Psoas muscle (tissue), 8 donors: ENCODE measurements at regions of chr12 and their contacts with region 1.

Region 1: GRCh38 chr12:4276524-4277204 is 3.1 kb downstream of the CCND2 start:
- DNase-seq: peak; percentile 77 to 86
- ATAC-seq: peak; percentile 64 to 78 (median 74)
- H3K4me3 ChIP-seq: peak overlapping the region; percentile 69
- H3K27ac ChIP-seq: no peak overlapping the region
- H3K4me1 ChIP-seq: peaks cover 37% of the 10 kb centered on the region
- H3K27me3 ChIP-seq: peaks cover 0 to 52% (median 29%) of the 10 kb centered on the region in 3 donors
- CTCF ChIP-seq: peak; percentile 88

Region 2: DNA sequence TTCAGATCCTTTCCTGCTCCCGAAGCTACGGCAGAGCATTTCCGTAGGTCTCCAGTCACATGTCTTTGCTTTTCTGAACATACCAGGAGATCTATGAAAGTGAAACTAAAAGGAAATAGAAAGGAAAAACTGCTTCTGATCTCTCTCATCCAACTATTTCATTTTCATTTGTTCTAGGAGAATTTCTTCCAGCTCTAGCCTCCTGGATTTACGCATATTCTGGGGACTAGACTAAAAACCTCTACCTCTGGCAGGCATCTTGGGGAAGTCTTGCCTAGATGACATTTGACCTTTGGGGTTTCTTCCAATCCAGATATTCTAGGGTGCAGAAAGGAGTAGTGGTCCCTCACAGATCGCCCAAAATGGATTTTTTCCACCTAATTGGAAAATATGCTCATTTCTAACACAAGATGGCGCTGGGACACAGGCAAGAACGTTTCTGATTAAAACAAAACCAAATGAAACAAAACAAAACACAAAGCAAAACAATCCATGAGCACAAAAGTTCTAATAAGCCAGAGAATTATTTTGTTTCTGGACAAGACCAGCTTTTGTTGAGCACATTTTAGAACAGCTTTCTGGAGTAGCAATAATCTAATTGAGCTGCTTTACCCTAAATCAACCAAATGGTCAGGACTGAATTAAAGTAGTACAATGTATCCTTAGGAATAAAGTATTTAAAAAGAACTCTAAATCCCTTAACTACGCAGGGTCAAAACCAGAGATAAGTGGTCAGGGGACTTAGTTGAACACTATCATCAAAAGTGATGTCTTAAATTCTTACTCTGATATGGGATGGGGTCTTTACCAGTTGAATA is 391.2 kb before region 1 on chr12:
- intact Hi-C with region 1: loop called (anchors 1 to 2 kb)
- DNase-seq: no peak
- ATAC-seq: peak in 1 of 4 donors; percentile 55
- H3K4me3 ChIP-seq: peak overlapping the region; percentile 33
- H3K27ac ChIP-seq: peak overlapping the region; percentile 5
- H3K4me1 ChIP-seq: no peaks in the 10 kb centered on the region
- H3K27me3 ChIP-seq: peaks cover 0 to 4% (median 3%) of the 10 kb centered on the region in 3 donors
- CTCF ChIP-seq: peak; percentile 81

Region 3: DNA sequence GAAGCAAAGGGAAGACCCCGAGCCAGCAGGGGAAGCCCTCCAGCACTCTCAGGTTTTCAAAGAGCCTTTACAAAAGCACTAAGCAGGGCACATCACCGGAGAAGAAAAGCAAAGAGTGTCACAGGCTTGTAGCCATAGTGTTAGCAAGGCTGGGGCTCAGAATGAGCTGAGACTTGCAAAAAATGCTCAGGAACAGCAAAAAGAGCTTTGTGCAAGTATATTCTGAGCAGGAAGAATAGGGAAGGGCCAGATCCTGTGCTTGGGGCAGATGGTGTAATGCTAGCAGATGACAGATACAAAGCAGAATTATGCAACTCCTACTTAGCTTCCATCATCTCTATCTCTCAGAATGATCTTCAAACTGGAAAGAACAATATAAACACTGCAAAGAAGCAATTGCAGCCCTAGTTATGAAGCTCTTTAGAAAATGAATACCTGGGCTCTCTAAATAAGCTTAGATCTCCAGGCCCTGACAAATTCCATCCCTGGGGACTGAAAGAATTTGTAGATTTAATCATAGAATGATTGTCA is 379.8 kb before region 1 on chr12:
- intact Hi-C with region 1: no loop called
- DNase-seq: no peak
- ATAC-seq: peak in 1 of 4 donors; percentile 38
- H3K4me3 ChIP-seq: no peak overlapping the region
- H3K27ac ChIP-seq: no peak overlapping the region
- H3K4me1 ChIP-seq: no peaks in the 10 kb centered on the region
- H3K27me3 ChIP-seq: peaks cover 0 to 5% (median 0%) of the 10 kb centered on the region in 3 donors
- CTCF ChIP-seq: no peak

Region 4: DNA sequence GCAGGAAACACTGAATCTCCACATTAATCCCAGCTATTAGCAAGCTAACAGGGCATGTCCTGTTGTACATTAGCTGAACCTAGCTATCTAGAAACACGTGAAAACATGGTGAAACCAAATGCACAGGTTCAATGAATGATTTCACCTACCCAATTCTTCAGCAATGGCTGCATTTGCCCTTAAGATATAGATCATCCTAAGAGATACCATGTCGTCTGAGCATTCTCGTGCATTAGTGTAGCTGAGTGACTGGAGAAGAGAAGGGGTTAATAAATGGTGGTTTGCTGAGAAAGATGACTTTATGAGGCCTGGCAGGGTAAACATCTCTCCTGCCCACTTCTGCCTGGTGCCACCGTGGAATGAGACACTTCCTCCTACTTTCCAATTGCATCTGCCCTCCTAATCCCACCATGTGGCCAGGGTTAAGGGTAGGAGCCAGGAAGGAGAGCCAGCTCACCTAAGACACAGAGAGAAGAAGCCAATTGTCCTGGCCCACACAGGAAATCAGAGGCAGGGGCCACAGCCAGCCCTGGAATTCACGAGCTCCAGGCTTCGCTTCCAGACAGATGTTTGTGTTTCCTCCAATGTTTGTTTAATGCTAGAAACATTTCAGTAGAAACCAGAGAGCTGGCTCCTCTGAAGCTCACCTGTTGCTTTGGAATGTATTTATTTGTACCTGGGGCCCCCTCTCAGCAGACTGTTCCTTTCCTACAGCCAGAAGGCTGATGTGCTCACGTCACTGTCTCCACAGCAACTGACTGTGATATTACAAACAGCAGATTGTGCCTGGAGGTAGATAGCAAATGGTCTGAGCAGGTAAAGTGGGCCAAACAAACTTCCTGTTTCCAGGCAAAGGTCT is 277.5 kb before region 1 on chr12:
- intact Hi-C with region 1: loop called (anchors 2 to 5 kb)
- DNase-seq: no peak
- ATAC-seq: no peak
- H3K4me3 ChIP-seq: no peak overlapping the region
- H3K27ac ChIP-seq: no peak overlapping the region
- H3K4me1 ChIP-seq: no peaks in the 10 kb centered on the region
- H3K27me3 ChIP-seq: peaks cover 0 to 6% (median 4%) of the 10 kb centered on the region in 3 donors
- CTCF ChIP-seq: no peak

Region 5: GRCh38 chr12:4037747-4038312 is 238.8 kb before region 1 on chr12:
- intact Hi-C with region 1: loop called in 1 of 2 experiments (anchors 5 kb)
- DNase-seq: no peak
- ATAC-seq: no peak
- H3K4me3 ChIP-seq: no peak overlapping the region
- H3K27ac ChIP-seq: no peak overlapping the region
- H3K4me1 ChIP-seq: no peaks in the 10 kb centered on the region
- H3K27me3 ChIP-seq: peaks cover 0 to 10% (median 0%) of the 10 kb centered on the region in 3 donors
- CTCF ChIP-seq: peak; percentile 70

Region 6: DNA sequence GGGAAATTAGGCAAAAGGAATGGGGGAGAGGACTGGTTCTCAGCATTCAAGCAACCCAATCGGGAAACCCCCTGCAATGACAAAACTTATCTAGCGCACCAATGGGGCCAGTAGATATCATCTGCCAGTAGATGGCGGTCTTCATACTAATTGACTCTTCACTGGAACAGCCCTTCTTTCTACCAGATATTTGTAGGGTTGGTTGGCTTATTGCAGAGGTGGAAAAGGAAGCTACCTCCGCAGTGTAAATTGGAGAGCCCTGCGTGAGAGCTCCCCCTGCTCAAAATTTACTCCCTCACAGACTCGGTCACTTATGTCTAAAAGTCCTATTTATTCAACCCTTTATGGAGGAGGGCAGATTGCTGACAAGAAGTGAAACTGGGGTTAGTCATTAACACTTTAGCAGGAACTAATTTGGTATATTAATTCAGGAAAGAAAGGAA is 169.2 kb before region 1 on chr12:
- intact Hi-C with region 1: loop called in 1 of 2 experiments (anchors 5 kb)
- DNase-seq: no peak
- ATAC-seq: no peak
- H3K4me3 ChIP-seq: no peak overlapping the region
- H3K27ac ChIP-seq: no peak overlapping the region
- H3K4me1 ChIP-seq: no peaks in the 10 kb centered on the region
- H3K27me3 ChIP-seq: peaks cover 0 to 9% (median 1%) of the 10 kb centered on the region in 3 donors
- CTCF ChIP-seq: peak; percentile 41

Region 7: DNA sequence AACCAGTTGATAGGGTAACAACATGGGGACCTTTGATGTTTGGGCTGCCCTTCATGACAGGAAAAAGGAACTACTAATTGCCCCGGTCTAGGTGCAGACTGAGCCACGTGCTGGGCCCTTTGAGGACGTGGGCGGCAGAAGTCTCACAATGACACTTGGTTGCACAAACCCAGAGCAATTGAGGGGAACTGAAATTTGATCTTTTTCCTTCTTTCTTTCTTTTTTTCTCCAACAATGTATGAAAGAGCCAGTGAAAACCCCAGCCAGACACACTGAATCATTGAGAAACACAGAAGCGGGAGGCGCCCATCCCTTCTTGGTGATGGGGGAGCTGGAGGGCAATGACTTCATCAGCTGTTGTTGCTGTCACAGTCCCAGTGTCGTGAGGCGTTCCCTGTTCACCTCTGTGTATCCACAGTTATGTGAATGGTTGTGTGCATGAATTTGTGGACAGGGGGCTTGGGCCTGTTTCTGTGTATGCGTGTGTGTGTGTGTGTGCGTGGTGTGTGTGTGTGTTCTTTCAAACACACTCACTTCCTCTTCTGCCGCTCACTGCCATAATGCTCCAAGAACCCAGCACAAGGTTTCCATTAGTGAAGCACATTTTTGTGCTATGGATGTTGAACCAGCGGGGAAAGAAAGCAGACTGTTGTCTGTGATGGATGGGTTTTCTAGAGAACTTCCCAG is 140.6 kb before region 1 on chr12:
- intact Hi-C with region 1: no loop called
- DNase-seq: peak in 1 of 2 donors; percentile 28
- ATAC-seq: peak in 1 of 4 donors; percentile 42
- H3K4me3 ChIP-seq: no peak overlapping the region
- H3K27ac ChIP-seq: no peak overlapping the region
- H3K4me1 ChIP-seq: no peaks in the 10 kb centered on the region
- H3K27me3 ChIP-seq: no peaks in the 10 kb centered on the region
- CTCF ChIP-seq: no peak

Region 8: DNA sequence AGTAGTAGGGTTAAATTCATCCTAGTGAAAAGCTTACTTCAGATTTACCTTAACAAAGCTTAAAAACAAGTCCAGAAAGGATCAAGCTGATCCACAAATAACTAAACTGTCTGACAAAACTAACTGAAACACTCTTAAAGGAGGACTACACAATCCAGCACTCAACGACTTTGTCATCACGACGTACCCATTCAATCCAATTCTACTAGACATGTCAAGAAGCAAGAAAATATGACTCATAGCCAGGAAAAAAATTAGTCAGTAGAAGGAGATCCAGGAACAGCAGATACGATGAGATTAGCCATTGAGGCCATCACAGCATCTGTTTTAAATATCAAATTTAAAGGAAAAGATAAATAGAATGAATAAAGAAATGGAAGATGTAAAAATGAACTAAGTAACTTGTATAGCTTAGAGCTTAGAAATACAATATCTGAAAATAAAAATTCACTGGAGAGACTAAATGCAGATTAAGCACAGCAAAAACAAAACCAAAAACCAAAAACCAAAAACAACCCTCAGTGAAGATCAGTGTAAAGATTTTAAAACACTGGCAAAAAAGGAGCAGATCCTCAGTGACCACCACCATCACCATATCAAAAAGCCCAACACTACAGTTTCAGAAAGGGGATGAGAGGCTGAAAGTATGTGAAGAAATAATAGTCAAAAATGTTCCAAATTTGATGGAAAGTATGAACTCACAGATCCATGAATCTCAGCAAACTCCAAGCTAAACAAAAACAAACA is 98.1 kb before region 1 on chr12:
- intact Hi-C with region 1: no loop called
- DNase-seq: no peak
- ATAC-seq: no peak
- H3K4me3 ChIP-seq: no peak overlapping the region
- H3K27ac ChIP-seq: no peak overlapping the region
- H3K4me1 ChIP-seq: no peaks in the 10 kb centered on the region
- H3K27me3 ChIP-seq: no peaks in the 10 kb centered on the region
- CTCF ChIP-seq: no peak

Region 9: GRCh38 chr12:4346931-4347330 is 70.3 kb after region 1 on chr12:
- intact Hi-C with region 1: no loop called
- DNase-seq: no peak
- ATAC-seq: no peak
- H3K4me3 ChIP-seq: no peak overlapping the region
- H3K27ac ChIP-seq: no peak overlapping the region
- H3K4me1 ChIP-seq: no peaks in the 10 kb centered on the region
- H3K27me3 ChIP-seq: no peaks in the 10 kb centered on the region
- CTCF ChIP-seq: no peak